PC-9 (cell line): ENCODE measurements at regions of chr1 and their contacts with region 1.

Region 1: DNA sequence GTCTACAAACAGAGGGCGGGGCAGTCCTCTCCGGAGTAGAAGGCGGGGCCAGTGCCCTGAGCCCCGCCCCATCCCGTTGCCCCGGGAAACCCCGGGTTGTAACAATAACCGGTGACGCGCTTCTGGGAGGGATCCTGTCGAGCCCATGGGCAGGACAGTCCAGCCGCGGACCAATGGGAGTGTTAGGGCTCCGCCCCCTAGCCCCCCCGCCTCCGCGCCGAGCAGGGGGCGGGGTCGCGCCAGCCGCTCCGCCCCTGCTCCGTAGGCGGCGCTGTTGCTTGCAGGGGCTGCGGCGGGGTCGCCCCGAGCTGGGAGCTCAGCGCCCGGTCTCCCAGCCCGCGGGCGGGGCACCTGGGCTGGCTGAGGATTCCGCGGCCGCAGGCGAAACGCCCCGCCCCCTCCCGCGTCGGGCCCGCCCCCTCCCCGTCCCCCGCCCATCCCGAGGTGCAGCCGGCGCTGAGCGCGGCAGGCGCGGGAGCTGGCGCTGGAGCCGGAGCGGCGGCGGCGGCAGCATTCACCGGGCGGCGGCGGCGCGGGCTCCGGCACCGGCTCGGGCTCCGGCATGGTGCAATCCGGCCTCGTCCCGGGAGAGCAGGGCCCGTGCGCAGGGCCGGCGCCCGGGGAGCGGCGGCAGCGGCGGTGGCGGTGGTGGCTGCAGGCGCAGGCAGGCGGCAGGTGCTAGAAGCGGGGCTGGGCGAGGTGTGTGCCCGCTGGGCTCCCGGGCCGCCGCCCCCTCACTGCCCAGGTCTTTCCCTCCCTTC is at the start of gene FOXO6:
- DNase-seq: peak; percentile 90 to 99
- H3K4me3 ChIP-seq: peak within 1 kb of the TSS; percentile 61; the same call in 1 of the 2 replicates
- H3K27ac ChIP-seq: no peak within 1 kb of the TSS
- H3K4me1 ChIP-seq: peaks cover 53% of the 10 kb centered on the region
- H3K27me3 ChIP-seq: peaks cover 7% of the 10 kb centered on the region; the same call in 1 of the 2 replicates
- CTCF ChIP-seq: peak; percentile 52
- total RNA-seq, gene FOXO6: 9.0 and 17.5 TPM in 2 replicates

Region 2: GRCh38 chr1:41343790-41344699 is 17.1 kb before region 1 on chr1:
- CTCF ChIA-PET with region 1: interaction called, 12 read pairs
- POLR2A ChIA-PET with region 1: interaction called, 4 read pairs
- intact Hi-C with region 1: no loop called
- DNase-seq: peak in 1 of 2 experiments; percentile 35
- H3K4me3 ChIP-seq: no peak overlapping the region
- H3K27ac ChIP-seq: no peak overlapping the region
- H3K4me1 ChIP-seq: peaks cover 64% of the 10 kb centered on the region
- H3K27me3 ChIP-seq: no peaks in the 10 kb centered on the region
- CTCF ChIP-seq: no peak

Region 3: DNA sequence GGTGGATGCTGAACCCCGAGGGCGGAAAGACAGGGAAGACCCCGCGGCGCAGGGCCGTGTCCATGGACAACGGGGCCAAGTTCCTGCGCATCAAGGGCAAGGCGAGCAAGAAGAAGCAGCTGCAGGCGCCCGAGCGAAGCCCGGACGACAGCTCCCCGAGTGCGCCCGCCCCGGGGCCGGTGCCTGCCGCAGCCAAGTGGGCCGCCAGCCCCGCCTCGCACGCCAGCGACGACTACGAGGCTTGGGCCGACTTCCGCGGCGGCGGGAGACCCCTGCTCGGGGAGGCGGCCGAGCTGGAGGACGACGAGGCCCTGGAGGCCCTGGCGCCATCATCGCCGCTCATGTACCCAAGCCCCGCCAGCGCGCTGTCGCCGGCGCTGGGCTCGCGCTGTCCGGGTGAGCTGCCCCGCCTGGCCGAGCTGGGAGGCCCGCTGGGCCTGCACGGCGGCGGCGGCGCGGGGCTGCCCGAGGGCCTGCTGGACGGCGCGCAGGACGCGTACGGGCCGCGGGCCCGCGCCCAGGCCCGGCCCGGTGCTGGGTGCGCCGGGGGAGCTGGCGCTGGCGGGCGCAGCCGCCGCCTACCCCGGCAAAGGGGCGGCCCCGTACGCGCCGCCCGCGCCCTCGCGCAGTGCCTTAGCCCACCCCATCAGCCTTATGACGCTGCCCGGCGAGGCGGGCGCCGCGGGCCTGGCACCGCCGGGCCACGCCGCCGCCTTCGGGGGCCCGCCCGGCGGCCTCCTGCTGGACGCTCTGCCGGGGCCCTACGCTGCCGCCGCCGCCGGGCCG is 20.7 kb after region 1 on chr1:
- CTCF ChIA-PET with region 1: interaction called, 5 read pairs
- POLR2A ChIA-PET with region 1: interaction called, 6 read pairs
- intact Hi-C with region 1: loop called (anchors 1 kb)
- DNase-seq: peak in 1 of 2 experiments; percentile 81
- H3K4me3 ChIP-seq: peak overlapping the region; percentile 91
- H3K27ac ChIP-seq: peak overlapping the region; percentile 82
- H3K4me1 ChIP-seq: peaks cover 28% of the 10 kb centered on the region
- H3K27me3 ChIP-seq: no peaks in the 10 kb centered on the region
- CTCF ChIP-seq: no peak

Region 4: GRCh38 chr1:41416552-41417334 is 55.6 kb after region 1 on chr1:
- CTCF ChIA-PET with region 1: interaction called, 5 read pairs
- POLR2A ChIA-PET with region 1: interaction called, 15 read pairs
- intact Hi-C with region 1: loop called (anchors 1 kb)
- DNase-seq: peak; percentile 73 to 81
- H3K4me3 ChIP-seq: no peak overlapping the region
- H3K27ac ChIP-seq: no peak overlapping the region
- H3K4me1 ChIP-seq: peaks cover 39% of the 10 kb centered on the region
- H3K27me3 ChIP-seq: no peaks in the 10 kb centered on the region
- CTCF ChIP-seq: peak; percentile 95

Region 5: DNA sequence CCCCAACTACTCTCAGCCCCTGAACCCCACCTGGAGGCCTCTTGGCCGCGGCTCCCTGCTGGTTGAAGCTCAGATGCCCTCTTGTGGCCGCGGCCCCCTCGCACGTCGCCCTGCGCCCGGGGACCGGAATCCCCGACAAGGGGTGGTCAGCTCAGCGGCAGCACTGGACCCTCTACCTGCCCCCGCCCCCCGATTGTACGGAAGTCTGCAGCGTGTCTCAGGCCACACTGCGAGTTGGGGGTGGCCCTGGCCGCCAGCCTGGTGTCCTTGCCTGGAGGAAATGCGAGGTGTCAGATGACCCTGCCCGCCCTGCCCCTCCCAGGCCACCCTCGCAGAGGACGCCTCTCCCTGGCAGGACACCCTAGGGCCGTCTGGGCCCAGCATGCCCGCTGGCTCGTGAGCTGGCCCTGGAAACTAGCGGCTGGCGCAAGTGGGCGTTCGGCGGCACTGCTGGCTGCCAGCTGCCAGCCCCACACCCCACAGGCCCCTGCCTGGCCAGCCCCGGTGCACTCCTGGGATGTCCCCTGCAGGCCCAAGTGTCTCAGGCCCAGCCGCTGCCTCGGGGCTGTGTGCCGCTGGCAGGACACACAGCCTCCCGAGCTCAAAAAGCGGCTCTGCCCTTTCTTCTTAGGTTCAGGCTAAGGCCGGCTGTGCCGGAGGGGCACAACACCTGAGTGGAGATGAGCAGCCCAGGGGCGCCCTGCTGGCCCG is 62.5 kb after region 1 on chr1:
- CTCF ChIA-PET with region 1: interaction called, 23 read pairs
- POLR2A ChIA-PET with region 1: interaction called, 9 read pairs
- intact Hi-C with region 1: no loop called
- DNase-seq: peak; percentile 45 to 70
- H3K4me3 ChIP-seq: peak overlapping the region; percentile 43; the same call in 1 of the 2 replicates
- H3K27ac ChIP-seq: no peak overlapping the region
- H3K4me1 ChIP-seq: peaks cover 24% of the 10 kb centered on the region
- H3K27me3 ChIP-seq: no peaks in the 10 kb centered on the region
- CTCF ChIP-seq: peak; percentile 55; the same call in 1 of the 2 replicates

Region 6: GRCh38 chr1:41662061-41662764 is 301.0 kb after region 1 on chr1:
- CTCF ChIA-PET with region 1: no interaction called
- POLR2A ChIA-PET with region 1: interaction called, 17 read pairs
- intact Hi-C with region 1: no loop called
- DNase-seq: peak in 1 of 2 experiments; percentile 63
- H3K4me3 ChIP-seq: peak overlapping the region; percentile 81; the same call in 1 of the 2 replicates
- H3K27ac ChIP-seq: no peak overlapping the region
- H3K4me1 ChIP-seq: peaks cover 53% of the 10 kb centered on the region
- H3K27me3 ChIP-seq: no peaks in the 10 kb centered on the region
- CTCF ChIP-seq: no peak